Calu3 (cell line): ENCODE measurements at regions of chr21 and their contacts with region 1.

Region 1: DNA sequence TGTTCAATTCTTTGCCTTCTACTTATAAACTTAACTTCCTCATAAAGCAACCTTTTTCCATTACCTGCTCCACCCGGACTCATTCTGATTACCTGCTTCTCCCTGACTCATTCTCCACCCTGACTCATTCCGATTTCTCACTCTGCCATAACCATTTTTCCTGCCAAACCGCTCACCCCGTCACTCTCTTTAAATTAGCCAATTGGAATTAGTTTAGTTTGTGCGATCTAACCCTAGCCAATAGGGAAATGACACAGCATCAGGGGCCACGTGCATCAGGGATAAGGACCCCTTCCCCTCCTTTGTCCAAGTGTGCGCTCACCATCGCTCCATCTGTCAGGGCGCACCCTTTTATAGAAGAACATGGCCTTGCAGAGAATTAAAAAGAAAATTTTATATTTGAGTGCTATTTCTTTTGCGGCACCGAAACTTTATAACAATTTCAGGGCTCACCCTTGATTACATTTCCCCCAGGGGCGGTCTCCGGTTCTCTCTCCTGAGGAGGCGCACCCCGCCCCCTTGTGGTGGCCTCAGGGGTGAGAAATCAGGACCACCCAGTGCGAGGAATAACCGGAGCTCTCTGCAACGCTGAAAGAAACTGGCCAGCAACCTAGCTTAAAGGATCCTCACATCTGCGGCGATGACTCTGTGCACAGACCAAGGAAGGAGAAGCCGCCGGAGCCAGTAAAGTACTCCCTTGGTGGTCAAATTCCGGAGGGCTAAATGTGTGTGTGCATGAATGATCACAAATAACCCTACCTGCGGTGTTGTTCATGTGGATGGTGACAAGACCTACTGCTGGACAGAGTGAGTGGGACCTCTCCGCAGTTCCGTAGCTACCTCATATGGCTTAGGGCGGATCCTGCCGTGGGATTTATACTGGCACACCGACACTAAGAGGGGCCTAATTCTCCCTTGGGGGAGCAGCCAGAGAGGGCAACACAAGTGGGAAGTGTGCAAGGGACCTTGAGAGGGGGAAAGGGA is 30.3 kb upstream of the CBR3 start:
- DNase-seq: peak; percentile 58
- H3K4me3 Mint-ChIP-seq: peak overlapping the region; percentile 55
- H3K27ac Mint-ChIP-seq: peak overlapping the region; percentile 81
- H3K4me1 Mint-ChIP-seq: peaks cover 9% of the 10 kb centered on the region
- H3K27me3 Mint-ChIP-seq: no peaks in the 10 kb centered on the region
- CTCF ChIP-seq: peak; percentile 53

Region 2: GRCh38 chr21:35963920-35964451 is 140.6 kb before region 1 on chr21:
- CTCF ChIA-PET with region 1: no interaction called
- intact Hi-C with region 1: no loop called
- DNase-seq: no peak
- H3K4me3 Mint-ChIP-seq: no peak overlapping the region
- H3K27ac Mint-ChIP-seq: no peak overlapping the region
- H3K4me1 Mint-ChIP-seq: no peaks in the 10 kb centered on the region
- H3K27me3 Mint-ChIP-seq: no peaks in the 10 kb centered on the region
- CTCF ChIP-seq: no peak

Region 3: GRCh38 chr21:36060159-36060921 is 44.3 kb before region 1 on chr21 and contains the start of gene SETD4:
- CTCF ChIA-PET with region 1: interaction called, 8 read pairs
- intact Hi-C with region 1: loop called (anchors 2 kb)
- DNase-seq: peak; percentile 85
- H3K4me3 Mint-ChIP-seq: peak within 1 kb of the TSS; percentile 83
- H3K27ac Mint-ChIP-seq: peak within 1 kb of the TSS; percentile 83
- H3K4me1 Mint-ChIP-seq: no peaks in the 10 kb centered on the region
- H3K27me3 Mint-ChIP-seq: no peaks in the 10 kb centered on the region
- CTCF ChIP-seq: no peak
- total RNA-seq, gene SETD4: 20.1 and 24.7 TPM in 2 replicates

Region 4: DNA sequence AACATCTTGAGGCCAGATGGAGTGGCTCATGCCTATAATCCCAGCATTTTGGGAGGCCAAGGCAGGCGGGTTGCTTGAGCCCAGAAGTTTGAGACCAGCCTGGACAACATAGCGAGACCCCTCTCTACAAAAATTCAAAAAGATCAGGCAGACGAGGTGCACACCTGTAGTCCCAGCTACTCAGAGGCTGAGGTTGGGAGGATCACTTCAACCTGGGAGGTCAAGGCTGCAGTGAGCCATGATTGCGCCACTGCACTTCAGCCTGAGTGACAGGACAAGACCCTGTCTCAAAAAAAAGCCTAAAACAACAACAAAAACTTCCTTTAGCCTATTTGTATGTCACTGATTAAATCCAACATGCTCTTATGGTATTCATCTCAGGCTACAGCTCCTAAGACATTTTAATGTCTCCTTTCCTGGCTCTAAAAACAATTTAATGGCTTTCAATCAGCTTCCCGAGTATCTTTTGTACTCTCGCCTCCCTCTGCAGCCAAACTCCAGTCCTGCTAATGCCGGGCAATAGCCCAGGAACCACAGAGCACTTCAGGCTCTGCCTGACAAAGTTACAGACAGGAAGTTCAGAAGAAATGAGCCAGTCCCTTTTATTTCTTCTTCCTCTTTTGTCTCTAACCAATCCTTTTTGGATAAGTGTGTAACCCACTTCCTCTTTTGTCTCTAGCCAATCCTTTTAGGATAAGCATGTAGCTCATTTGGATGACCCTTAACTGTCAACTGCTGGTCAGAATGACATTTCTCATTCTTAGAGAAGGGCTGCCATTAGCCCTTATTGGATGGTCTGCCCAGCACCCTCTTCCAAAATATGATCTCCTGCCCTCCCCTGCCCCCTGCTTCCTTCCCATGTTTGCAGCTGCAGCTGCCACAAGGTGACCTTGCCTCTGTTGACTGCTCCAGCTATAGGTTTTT is 45.4 kb after region 1 on chr21:
- CTCF ChIA-PET with region 1: no interaction called
- intact Hi-C with region 1: no loop called
- DNase-seq: no peak
- H3K4me3 Mint-ChIP-seq: no peak overlapping the region
- H3K27ac Mint-ChIP-seq: no peak overlapping the region
- H3K4me1 Mint-ChIP-seq: peaks cover 7% of the 10 kb centered on the region
- H3K27me3 Mint-ChIP-seq: no peaks in the 10 kb centered on the region
- CTCF ChIP-seq: no peak